OCI-LY7 (cell line): ENCODE measurements at regions of chr14 and their contacts with region 1.

Region 1: DNA sequence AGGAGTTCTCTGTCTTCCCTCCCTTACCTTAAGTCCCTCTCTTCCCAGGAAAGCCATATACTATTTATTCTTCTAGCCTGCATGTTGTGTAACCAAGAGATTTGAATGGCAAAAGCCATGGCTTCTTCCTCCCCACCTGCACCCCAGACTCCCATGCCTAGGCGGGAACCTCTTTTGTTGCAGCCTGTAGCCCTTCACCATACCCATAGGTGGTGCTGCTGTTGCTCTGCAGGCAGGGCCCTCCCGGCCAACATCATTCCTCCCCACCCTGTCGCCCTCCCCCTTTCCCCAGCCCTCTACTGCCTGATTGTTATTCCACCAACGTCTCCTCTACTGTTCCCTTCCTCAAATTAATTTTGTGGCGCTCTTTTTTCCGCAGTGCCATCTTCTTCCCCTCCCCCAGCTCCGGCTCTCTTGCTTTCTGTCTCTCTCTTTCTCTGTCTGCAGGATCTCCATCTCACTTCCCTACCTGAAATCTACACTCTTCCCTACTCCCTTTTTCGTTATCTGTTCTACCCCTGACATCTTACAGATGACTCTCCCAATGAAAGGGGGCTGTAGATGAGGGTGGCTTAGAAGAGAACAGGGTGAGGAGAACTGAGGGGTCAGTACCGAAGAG is 13.8 kb downstream of the NGDN start:
- DNase-seq: peak; percentile 48
- H3K4me3 ChIP-seq: no peak overlapping the region
- H3K27ac ChIP-seq: no peak overlapping the region
- H3K4me1 ChIP-seq: peaks cover 6% of the 10 kb centered on the region
- CTCF ChIP-seq: peak; percentile 80

Region 2: GRCh38 chr14:23339506-23340268 is 143.7 kb before region 1 on chr14:
- CTCF ChIA-PET with region 1: no interaction called
- POLR2A ChIA-PET with region 1: no interaction called
- intact Hi-C with region 1: no loop called
- DNase-seq: peak; percentile 27
- H3K4me3 ChIP-seq: no peak overlapping the region
- H3K27ac ChIP-seq: no peak overlapping the region
- H3K4me1 ChIP-seq: no peaks in the 10 kb centered on the region
- CTCF ChIP-seq: no peak

Region 3: DNA sequence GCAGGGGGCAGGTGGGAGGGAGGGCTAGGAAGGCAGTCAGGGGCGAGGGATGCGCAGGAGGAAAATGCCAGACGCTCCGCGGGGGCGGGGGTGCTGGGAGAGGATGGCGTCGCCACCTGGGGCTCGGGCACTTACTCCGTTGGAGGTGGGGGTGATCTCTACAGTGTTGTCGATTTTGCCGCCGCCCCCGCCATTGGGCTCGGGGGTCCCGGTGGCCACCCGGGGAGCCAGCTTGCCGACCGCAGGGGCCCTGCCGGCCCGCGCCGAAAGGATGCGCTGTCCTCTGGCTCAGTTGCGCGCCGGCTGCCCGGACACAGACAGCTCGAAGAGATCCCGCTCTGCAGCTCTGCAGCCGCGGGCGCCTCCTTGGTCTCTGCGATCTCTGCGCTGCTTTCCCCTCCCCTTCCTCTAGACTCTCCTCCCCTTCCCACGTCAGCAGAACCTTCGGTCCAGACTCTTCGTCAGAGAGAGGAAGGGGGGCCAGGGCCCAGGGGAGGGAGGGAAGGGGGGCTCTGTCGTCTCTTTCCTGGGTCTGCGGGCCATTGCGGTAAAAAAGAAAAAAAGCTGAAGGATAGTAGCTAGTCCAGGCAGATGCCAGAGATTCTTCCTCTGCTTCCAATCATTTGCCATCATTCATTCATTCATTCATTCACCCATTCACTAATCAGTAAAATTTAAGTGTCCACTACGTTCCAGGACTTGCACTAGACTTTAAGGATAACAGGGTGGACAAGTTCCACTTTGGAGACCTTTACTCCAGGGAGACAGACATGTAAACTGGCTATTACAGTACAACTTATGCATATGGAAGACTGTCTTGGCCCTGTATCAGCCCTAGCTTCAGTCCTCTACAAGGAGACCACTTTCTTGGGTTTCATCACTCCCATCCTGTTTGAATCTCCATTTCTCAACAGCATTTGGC is 130.6 kb before region 1 on chr14 and contains the start of gene SLC22A17:
- CTCF ChIA-PET with region 1: no interaction called
- POLR2A ChIA-PET with region 1: no interaction called
- intact Hi-C with region 1: no loop called
- DNase-seq: no peak
- H3K4me3 ChIP-seq: no peak within 1 kb of the TSS
- H3K27ac ChIP-seq: no peak within 1 kb of the TSS
- H3K4me1 ChIP-seq: no peaks in the 10 kb centered on the region
- CTCF ChIP-seq: no peak
- total RNA-seq, gene SLC22A17: not detected in 2 replicates

Region 4: GRCh38 chr14:23539248-23540140 is 56.1 kb after region 1 on chr14:
- CTCF ChIA-PET with region 1: interaction called, 3 read pairs
- POLR2A ChIA-PET with region 1: no interaction called
- intact Hi-C with region 1: loop called (anchors 1 kb)
- DNase-seq: peak; percentile 58
- H3K4me3 ChIP-seq: no peak overlapping the region
- H3K27ac ChIP-seq: no peak overlapping the region
- H3K4me1 ChIP-seq: no peaks in the 10 kb centered on the region
- CTCF ChIP-seq: peak; percentile 83